ENCODE measurements at regions of chr1 and their contacts with region 1.

Region 1: GRCh38 chr1:231990388-231990787 is 363.8 kb downstream of the DISC1 start:
- DNase-seq: peak; percentile 93
- H3K4me3 ChIP-seq: no peak overlapping the region
- H3K27ac ChIP-seq: peak overlapping the region; percentile 23
- H3K4me1 ChIP-seq: peaks cover 18% of the 10 kb centered on the region
- H3K27me3 ChIP-seq: no peaks in the 10 kb centered on the region
- CTCF ChIP-seq: no peak
- POLR2A ChIP-seq: peak; percentile 65

Region 2: GRCh38 chr1:232012773-232013386 is 22.5 kb after region 1 on chr1:
- CTCF ChIA-PET with region 1: no interaction called
- POLR2A ChIA-PET with region 1: interaction called, 3 read pairs
- dilution Hi-C with region 1: no loop called
- intact Hi-C with region 1: loop called (anchors 1 kb)
- DNase-seq: peak; percentile 97
- H3K4me3 ChIP-seq: peak overlapping the region in 1 of 3 experiments; percentile 14
- H3K27ac ChIP-seq: peak overlapping the region; percentile 80
- H3K4me1 ChIP-seq: peaks cover 27% of the 10 kb centered on the region
- H3K27me3 ChIP-seq: no peaks in the 10 kb centered on the region
- CTCF ChIP-seq: no peak
- POLR2A ChIP-seq: no peak

Region 3: DNA sequence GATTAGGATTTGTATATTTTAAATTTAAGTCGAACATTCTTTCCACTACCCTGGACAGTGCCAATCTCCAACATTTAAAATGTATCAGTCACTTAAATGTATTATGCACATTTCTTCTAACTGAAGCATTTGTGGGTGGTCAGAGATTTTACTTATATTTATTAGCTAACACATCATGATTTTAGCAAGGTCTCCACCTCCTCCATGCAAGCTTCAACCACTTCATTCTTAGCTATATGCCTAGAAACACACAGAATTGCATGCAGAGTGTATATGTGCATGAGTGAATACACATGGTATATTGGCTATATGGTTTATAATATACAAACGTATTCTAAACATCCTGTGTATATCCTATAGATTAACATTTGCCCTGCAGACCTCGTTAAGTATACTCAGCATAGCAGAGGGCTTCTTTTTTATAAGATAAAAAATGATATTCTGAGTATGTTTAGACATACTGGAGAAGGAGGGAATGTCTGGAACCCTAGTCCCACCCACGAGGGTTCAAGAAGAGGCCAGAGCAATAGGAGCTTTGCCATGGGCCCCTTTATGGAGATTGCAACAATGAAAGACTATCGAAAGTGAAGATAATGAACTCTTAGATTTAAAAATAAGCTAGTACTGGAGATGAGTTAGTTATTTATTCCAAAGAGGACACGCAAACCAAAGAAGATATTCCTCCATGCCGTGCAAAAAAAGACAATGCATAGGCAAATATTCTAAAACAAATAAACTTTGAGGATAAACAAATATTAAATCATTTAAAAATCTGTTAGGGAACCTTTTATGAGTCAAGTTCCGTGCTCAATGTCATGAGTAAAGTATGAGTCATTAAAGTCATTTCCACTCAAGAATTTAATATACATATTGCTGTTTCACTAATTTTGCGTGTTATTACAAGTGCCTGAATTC is 159.2 kb after region 1 on chr1:
- CTCF ChIA-PET with region 1: no interaction called
- POLR2A ChIA-PET with region 1: no interaction called
- dilution Hi-C with region 1: no loop called
- intact Hi-C with region 1: loop called (anchors 5 kb)
- DNase-seq: peak; percentile 81
- H3K4me3 ChIP-seq: peak overlapping the region in 1 of 3 experiments; percentile 13
- H3K27ac ChIP-seq: peak overlapping the region; percentile 45
- H3K4me1 ChIP-seq: peaks cover 22% of the 10 kb centered on the region
- H3K27me3 ChIP-seq: no peaks in the 10 kb centered on the region
- CTCF ChIP-seq: no peak
- POLR2A ChIP-seq: no peak

Measured in endothelial cell of umbilical vein (primary cell).